Dorsolateral prefrontal cortex (tissue), 120 donors: ENCODE measurements at regions of chr17 and their contacts with region 1.

Region 1: DNA sequence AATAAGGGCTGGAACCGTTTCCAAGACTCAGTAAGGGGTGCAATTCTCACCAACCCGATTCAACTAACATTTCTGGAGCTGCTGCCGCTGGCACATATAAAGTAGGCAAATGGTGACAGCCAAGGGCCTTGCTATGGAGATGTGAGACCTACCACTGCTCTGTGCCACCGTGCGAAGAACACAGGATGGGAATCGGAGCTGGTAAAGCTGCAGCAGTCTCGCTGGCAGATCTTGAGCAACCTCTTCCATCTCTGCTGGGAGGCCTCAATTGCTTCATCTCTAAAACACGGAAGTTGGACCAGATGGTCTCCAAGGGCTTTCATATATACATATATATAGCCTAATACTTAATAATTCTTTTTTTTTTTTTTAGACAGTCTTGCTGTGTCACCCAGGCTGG is 128.9 kb upstream of the RCVRN start:
- DNase-seq: peak in 2 of 10 donors; percentile 39 to 43
- H3K4me3 ChIP-seq: peak overlapping the region in 48 of 59 donors; percentile 4 to 74 (median 48)
- H3K27ac ChIP-seq: peak overlapping the region in 57 of 59 donors; percentile 32 to 98 (median 93)
- H3K27me3 ChIP-seq: no peaks in the 10 kb centered on the region
- CTCF ChIP-seq: no peak

Region 2: DNA sequence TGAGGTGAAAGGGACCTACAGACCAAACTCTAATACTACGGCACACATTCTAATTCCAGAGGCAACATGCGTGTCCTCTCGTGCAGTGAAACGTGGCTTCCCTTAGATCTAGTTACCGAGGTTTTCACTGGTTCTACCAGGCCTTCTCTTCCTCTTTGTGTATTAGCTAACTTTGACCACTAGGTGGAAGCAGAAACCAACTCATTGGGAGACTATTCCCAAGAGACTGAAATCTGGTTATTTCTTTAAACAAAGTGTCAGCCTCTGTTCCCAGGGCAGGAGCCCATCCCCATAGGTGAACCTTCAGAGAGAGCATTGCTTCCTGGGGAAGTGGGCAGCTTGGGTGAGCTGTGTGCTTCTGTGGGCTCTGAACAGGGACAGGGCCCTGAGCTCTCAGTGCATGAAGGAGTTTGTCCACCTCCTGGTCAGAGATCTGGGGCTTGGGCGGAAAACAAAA is 109.2 kb before region 1 on chr17:
- intact Hi-C with region 1: loop called in 1 of 2 experiments (anchors 5 kb)
- DNase-seq: no peak
- H3K4me3 ChIP-seq: no peak overlapping the region
- H3K27ac ChIP-seq: peak overlapping the region in 46 of 59 donors; percentile 2 to 77 (median 54)
- H3K27me3 ChIP-seq: no peaks in the 10 kb centered on the region
- CTCF ChIP-seq: peak; percentile 67 to 97 (median 90)

Region 3: GRCh38 chr17:9968902-9969617 is 64.9 kb before region 1 on chr17:
- intact Hi-C with region 1: loop called in 1 of 2 experiments (anchors 5 kb)
- DNase-seq: no peak
- H3K4me3 ChIP-seq: no peak overlapping the region
- H3K27ac ChIP-seq: peak overlapping the region in 22 of 59 donors; percentile 7 to 69 (median 44)
- H3K27me3 ChIP-seq: no peaks in the 10 kb centered on the region
- CTCF ChIP-seq: no peak

Region 4: GRCh38 chr17:10050597-10051101 is 16.7 kb after region 1 on chr17:
- intact Hi-C with region 1: loop called in 1 of 2 experiments (anchors 1 kb)
- DNase-seq: no peak
- H3K4me3 ChIP-seq: no peak overlapping the region
- H3K27ac ChIP-seq: peak overlapping the region in 44 of 59 donors; percentile 2 to 99 (median 51)
- H3K27me3 ChIP-seq: no peaks in the 10 kb centered on the region
- CTCF ChIP-seq: no peak

Region 5: DNA sequence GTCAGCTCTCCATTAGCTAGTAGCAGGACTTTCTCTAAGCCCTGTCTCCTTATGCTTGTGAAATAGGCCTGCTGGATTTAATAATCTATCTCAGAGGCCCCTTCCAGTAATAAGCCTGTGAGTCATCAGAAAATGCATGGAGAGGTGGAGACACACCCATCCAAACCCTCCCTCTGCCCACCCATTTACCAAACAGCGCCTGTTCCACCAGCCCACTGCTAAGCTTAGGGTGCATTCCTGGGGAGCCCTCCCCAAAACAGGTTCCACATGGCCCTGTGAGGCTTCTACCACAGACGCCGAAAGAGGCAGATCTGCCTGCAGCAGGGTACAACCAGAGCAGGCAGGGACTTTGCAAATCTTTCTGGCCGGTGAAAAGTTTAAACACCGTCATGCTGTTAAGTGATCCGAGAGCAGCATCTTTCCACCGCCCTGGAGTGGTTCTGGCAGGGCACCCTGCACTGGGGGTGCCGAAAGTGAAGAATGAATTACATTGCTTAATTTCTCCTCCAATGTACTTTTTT is 65.2 kb after region 1 on chr17:
- intact Hi-C with region 1: no loop called
- DNase-seq: no peak
- H3K4me3 ChIP-seq: no peak overlapping the region
- H3K27ac ChIP-seq: no peak overlapping the region
- H3K27me3 ChIP-seq: no peaks in the 10 kb centered on the region
- CTCF ChIP-seq: no peak

Region 6: GRCh38 chr17:10127819-10128425 is 94.0 kb after region 1 on chr17:
- intact Hi-C with region 1: loop called in 1 of 2 experiments (anchors 1 kb)
- DNase-seq: peak in 8 of 10 donors; percentile 11 to 74 (median 52)
- H3K4me3 ChIP-seq: peak overlapping the region in 13 of 59 donors; percentile 6 to 33 (median 15)
- H3K27ac ChIP-seq: peak overlapping the region in 43 of 59 donors; percentile 5 to 76 (median 54)
- H3K27me3 ChIP-seq: no peaks in the 10 kb centered on the region
- CTCF ChIP-seq: peak in 5 of 56 donors; percentile 4 to 31 (median 15)

Region 7: GRCh38 chr17:10370209-10370608 is 336.2 kb after region 1 on chr17:
- intact Hi-C with region 1: no loop called
- DNase-seq: no peak
- H3K4me3 ChIP-seq: no peak overlapping the region
- H3K27ac ChIP-seq: no peak overlapping the region
- H3K27me3 ChIP-seq: peaks cover 0 to 6% (median 0%) of the 10 kb centered on the region in 45 donors
- CTCF ChIP-seq: no peak